Vagina (tissue), 2 donors: ENCODE measurements at regions of chr10 and their contacts with region 1.

Region 1: GRCh38 chr10:12902135-12902572 is 99.4 kb downstream of the CCDC3 start:
- DNase-seq: peak in 1 of 2 donors; percentile 79
- H3K4me3 ChIP-seq: no peak overlapping the region
- H3K27ac ChIP-seq: no peak overlapping the region
- H3K4me1 ChIP-seq: peaks cover 12% of the 10 kb centered on the region
- H3K27me3 ChIP-seq: no peaks in the 10 kb centered on the region
- CTCF ChIP-seq: peak; percentile 39 to 78 (median 43)
- POLR2A ChIP-seq: no peak

Region 2: DNA sequence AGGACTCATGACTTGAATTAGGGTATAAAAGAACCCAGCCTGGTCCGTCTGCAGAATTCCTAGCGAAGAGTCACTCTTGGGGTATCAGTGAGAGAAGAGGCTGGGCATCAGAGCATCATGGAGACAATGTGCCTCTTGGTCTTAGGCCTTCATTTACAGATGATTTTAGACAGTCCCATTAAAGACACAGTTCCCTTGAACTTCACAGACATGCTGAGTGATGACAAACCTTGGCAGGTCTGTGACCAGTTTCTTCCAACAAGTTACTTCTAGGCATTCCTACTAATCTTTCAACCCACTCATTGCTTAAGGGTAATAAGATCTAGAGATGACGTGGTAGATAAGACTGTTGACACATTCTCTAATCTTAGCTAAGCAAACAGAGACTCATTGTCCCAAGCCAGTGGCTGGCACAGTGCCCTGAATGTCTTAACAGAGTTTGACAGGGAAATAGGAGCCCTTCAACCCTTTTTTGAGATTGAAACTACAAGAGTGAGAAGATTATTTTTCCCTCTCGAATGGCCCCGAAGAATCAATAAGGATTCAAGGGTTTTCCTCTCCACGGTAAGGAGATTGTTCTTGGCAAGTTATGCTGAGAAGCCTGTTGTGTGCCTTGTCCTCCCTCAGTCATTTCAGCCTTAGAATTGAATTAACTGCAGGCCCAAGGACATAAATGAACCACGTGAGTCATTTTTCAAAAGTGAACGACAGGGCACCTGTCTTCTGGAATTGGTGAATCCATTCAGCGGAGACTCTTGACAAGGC is 181.8 kb before region 1 on chr10:
- intact Hi-C with region 1: loop called (anchors 10 kb)
- DNase-seq: no peak
- H3K4me3 ChIP-seq: no peak overlapping the region
- H3K27ac ChIP-seq: peak overlapping the region; percentile 50
- H3K4me1 ChIP-seq: peaks cover 24% of the 10 kb centered on the region
- H3K27me3 ChIP-seq: no peaks in the 10 kb centered on the region
- CTCF ChIP-seq: no peak
- POLR2A ChIP-seq: no peak

Region 3: DNA sequence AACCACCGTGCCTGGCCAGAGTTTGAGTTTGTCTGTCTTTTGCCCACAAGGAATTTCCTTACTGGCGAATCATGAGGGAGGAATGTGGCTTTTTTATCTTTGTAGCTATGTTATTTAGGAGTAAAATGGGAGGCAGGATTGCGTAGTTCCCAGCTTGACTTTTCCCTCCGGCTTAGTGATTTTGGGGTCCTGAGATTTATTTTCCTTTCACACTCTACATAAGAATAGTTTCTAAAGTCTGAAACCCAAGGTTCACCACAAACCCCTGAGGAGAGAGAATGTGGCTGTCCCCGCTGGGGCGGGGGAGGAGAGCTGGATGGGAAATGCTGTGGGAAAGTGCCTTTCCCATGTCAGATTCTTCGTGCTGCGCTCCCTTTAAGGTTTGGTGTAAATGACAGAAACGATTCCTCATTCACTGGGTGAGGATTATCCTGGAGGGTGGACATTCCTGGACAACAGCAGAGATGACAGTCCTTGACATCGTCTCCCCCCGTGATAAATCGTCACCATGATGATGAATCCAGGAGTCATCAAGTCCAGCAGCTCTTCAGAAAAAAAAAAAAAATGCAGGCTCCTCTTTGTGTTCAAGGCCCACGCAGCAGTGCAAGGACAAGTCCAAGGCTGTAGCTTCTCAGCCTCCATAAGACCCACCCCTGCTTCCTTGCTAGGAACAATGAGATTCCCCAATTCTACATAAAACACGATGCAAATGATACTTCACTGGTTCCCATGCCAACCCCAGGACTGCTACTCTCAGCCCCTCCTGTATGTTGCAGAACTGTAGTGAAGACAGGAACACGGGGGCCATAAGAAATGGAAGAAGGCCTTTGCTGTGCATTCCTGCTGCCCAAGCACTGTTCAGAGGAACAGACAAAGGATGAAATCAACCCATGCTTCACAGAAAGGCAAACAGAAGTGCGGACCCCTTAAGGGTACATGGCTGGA is 133.7 kb before region 1 on chr10:
- intact Hi-C with region 1: no loop called
- DNase-seq: no peak
- H3K4me3 ChIP-seq: no peak overlapping the region
- H3K27ac ChIP-seq: no peak overlapping the region
- H3K4me1 ChIP-seq: no peaks in the 10 kb centered on the region
- H3K27me3 ChIP-seq: no peaks in the 10 kb centered on the region
- CTCF ChIP-seq: no peak
- POLR2A ChIP-seq: no peak

Region 4: GRCh38 chr10:12782537-12782936 is 119.6 kb before region 1 on chr10:
- intact Hi-C with region 1: loop called (anchors 10 kb)
- DNase-seq: no peak
- H3K4me3 ChIP-seq: no peak overlapping the region
- H3K27ac ChIP-seq: no peak overlapping the region
- H3K4me1 ChIP-seq: peaks cover 5% of the 10 kb centered on the region
- H3K27me3 ChIP-seq: no peaks in the 10 kb centered on the region
- CTCF ChIP-seq: peak in 1 of 3 experiments; percentile 37
- POLR2A ChIP-seq: no peak

Region 5: GRCh38 chr10:14185316-14186045 is 1283.3 kb after region 1 on chr10:
- intact Hi-C with region 1: no loop called
- DNase-seq: no peak
- H3K4me3 ChIP-seq: no peak overlapping the region
- H3K27ac ChIP-seq: no peak overlapping the region
- H3K4me1 ChIP-seq: no peaks in the 10 kb centered on the region
- H3K27me3 ChIP-seq: no peaks in the 10 kb centered on the region
- CTCF ChIP-seq: no peak
- POLR2A ChIP-seq: no peak